WTC11 (cell line): ENCODE measurements at regions of chr19 and their contacts with region 1.

Region 1: DNA sequence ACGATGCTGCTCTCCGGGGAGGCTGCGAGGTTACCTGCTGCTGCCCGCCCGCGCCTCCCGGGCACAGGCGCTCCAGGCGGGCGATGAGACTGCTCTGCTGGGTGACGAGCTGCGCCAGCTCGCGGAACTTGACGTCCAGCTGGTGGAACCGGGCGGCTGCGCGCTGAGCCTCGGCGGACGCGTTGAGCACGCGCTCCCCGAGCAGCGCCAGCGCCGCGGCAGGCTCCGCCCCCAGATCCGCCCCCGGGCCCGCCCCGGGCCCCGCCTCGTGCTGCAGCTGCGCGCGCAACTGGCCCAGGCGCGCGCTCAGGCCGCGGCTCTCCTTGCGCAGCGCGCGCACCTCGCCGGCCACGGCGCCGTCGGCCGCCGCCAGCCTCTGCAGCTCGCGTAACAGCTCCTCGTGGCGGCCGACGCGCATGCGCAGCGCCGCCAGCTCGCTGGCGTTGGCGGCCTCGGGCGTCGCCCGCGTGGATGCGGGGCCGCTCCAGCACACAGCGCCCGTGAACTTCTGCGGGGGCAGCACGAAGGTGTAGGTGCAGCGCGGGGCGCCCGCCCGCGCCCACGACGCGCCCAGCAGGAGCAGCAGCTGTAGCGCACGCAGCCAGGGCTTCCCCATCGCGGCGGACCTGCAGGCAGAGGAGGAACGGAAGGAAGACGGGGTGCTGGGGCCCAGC is 6.4 kb downstream of the ANGPTL6 start:
- DNase-seq: peak; percentile 87
- ATAC-seq: peak; percentile 87
- H3K4me3 Mint-ChIP-seq: peak overlapping the region; percentile 42
- H3K27ac Mint-ChIP-seq: no peak overlapping the region
- H3K4me1 Mint-ChIP-seq: peaks cover 2% of the 10 kb centered on the region; the same call in 1 of the 2 replicates
- H3K27me3 Mint-ChIP-seq: peaks cover 62% of the 10 kb centered on the region
- CTCF ChIP-seq: no peak

Region 2: GRCh38 chr19:10106100-10106936 is 10.2 kb after region 1 on chr19 and contains the start of gene PPAN:
- CTCF ChIA-PET with region 1: interaction called, 10 read pairs
- POLR2A ChIA-PET with region 1: interaction called, 9 read pairs
- DNase-seq: peak; percentile 98
- ATAC-seq: peak; percentile 86
- H3K4me3 Mint-ChIP-seq: peak within 1 kb of the TSS; percentile 95
- H3K27ac Mint-ChIP-seq: peak within 1 kb of the TSS; percentile 84
- H3K4me1 Mint-ChIP-seq: peaks cover 10% of the 10 kb centered on the region
- H3K27me3 Mint-ChIP-seq: no peaks in the 10 kb centered on the region; the same call in 1 of the 2 replicates
- CTCF ChIP-seq: no peak
- total RNA-seq, gene PPAN: 74.1 to 83.7 TPM (median 80.8 TPM) in 3 replicates

Region 3: GRCh38 chr19:10112895-10113591 is 17.0 kb after region 1 on chr19:
- CTCF ChIA-PET with region 1: interaction called, 23 read pairs
- POLR2A ChIA-PET with region 1: interaction called, 6 read pairs
- DNase-seq: peak; percentile 86
- ATAC-seq: peak; percentile 58
- H3K4me3 Mint-ChIP-seq: no peak overlapping the region
- H3K27ac Mint-ChIP-seq: no peak overlapping the region
- H3K4me1 Mint-ChIP-seq: peaks cover 7% of the 10 kb centered on the region; the same call in 1 of the 2 replicates
- H3K27me3 Mint-ChIP-seq: no peaks in the 10 kb centered on the region
- CTCF ChIP-seq: peak; percentile 55

Region 4: GRCh38 chr19:10173257-10173926 is 77.3 kb after region 1 on chr19:
- CTCF ChIA-PET with region 1: no interaction called
- POLR2A ChIA-PET with region 1: no interaction called
- DNase-seq: no peak
- ATAC-seq: no peak
- H3K4me3 Mint-ChIP-seq: no peak overlapping the region
- H3K27ac Mint-ChIP-seq: no peak overlapping the region
- H3K4me1 Mint-ChIP-seq: no peaks in the 10 kb centered on the region
- H3K27me3 Mint-ChIP-seq: no peaks in the 10 kb centered on the region
- CTCF ChIP-seq: no peak

Region 5: GRCh38 chr19:10191347-10191746 is 95.3 kb after region 1 on chr19:
- CTCF ChIA-PET with region 1: no interaction called
- POLR2A ChIA-PET with region 1: no interaction called
- DNase-seq: no peak
- ATAC-seq: no peak
- H3K4me3 Mint-ChIP-seq: no peak overlapping the region
- H3K27ac Mint-ChIP-seq: no peak overlapping the region
- H3K4me1 Mint-ChIP-seq: peaks cover 8% of the 10 kb centered on the region
- H3K27me3 Mint-ChIP-seq: no peaks in the 10 kb centered on the region
- CTCF ChIP-seq: no peak